Left ventricle myocardium inferior (tissue), 1 donor: ENCODE measurements at regions of chr13 and their contacts with region 1.

Region 1: DNA sequence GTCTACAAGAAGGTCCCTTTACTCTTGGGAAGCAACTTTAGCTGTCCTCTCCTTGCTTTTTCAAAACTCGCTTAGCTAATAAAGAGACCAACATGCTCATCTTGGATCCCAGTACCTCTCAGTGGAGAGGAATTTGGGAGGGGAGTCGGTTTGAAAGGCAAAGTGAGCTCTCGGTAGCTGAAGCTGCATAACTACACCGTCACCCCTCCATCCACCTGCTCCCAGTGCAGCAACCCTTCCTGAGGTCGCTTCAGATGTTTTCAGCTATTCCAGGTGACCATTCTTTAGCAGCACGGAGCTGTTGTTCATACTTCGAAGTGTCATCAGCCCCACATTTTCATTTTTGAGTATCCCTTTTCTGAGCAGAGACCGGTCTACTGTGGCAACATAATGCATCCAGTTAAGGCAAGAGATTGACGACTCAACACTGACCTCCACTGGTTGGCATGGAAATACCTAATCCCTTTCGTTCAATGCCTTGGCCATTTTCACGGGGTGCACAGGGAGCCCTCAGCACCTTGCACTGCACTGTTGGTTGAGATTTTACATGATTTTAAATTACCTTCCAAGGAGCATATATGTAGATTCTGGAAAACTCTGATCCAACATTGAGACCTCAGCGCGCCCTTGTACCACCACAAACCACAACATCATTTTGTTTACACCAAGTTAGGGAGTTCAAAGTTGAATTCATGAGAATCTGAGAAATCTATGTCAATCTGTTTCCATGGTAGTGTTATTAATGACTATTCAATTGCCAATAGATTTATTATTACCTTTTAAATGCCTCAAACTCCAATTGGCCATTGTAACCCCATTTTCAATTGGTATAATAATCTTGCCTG is 42.2 kb downstream of the DLEU7 start:
- DNase-seq: no peak
- H3K4me3 ChIP-seq: peak overlapping the region; percentile 35
- H3K27ac ChIP-seq: peak overlapping the region; percentile 37
- H3K4me1 ChIP-seq: peaks cover 27% of the 10 kb centered on the region
- H3K27me3 ChIP-seq: no peaks in the 10 kb centered on the region
- CTCF ChIP-seq: peak; percentile 84

Region 2: DNA sequence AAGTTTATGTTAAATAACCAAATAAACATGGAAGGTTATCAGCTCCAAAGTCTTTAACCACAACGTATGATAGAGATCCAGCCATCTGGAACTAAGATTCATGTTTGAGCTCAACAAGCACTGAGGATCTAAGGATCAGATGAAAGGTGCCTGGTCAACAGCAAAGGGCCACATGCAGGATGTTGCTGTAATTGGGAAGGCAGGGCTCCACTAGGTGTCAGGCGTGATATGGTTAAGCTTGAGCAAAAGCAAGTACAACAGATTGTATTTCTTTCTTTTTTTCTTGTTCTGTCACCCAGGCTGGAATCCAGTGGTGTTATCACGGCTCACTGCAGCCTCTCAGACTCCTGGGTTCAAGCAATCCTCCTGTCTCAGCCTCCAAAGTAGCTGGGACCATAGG is 1122.1 kb before region 1 on chr13:
- intact Hi-C with region 1: no loop called
- DNase-seq: no peak
- H3K4me3 ChIP-seq: no peak overlapping the region
- H3K27ac ChIP-seq: no peak overlapping the region
- H3K4me1 ChIP-seq: no peaks in the 10 kb centered on the region
- H3K27me3 ChIP-seq: no peaks in the 10 kb centered on the region
- CTCF ChIP-seq: peak; percentile 8

Region 3: DNA sequence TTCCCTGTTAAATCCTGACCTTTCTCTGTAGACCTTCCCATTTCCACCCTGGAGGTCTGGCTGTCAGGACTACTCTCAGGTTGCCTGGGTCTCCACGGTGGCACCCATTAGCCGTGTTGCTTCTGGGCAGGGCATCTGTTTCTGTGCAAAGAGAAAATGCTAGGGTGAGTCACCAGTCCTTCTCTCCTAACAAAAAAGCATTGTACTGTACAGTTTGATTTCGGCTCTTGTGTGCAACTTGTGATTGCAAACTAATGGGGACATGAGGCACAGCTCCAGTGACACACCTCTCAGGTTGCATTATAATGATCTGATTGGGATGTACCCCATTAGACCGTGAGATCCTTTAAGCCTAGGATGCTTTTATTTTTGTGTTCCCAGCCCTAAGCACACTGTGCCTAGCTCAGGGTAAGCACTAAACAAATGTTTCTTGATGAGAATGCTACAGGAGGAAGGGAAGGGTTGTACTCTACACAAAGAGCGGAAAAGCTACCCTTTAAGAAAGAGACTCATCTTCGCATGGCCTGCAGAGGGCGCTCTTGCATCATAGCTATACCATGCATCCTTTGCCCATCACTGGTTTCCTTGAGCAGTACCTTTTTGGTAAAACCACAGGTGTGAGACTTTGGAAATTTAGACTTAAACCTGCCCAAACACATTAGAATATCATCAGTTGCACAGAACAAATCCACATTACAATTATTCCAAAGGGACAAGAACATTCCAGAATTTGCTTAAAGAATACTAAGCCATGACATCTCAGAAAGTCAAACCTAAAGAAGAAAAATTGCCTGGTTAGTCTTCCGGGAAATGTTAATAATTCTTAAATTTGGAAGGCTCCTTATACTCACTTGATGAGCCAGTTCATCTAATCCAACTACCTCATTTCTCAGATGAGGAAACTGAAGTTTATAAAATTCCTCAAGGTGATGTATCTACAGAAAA is 824.7 kb before region 1 on chr13:
- intact Hi-C with region 1: loop called (anchors 5 kb)
- DNase-seq: peak; percentile 56
- H3K4me3 ChIP-seq: no peak overlapping the region
- H3K27ac ChIP-seq: no peak overlapping the region
- H3K4me1 ChIP-seq: peaks cover 17% of the 10 kb centered on the region
- H3K27me3 ChIP-seq: no peaks in the 10 kb centered on the region
- CTCF ChIP-seq: peak; percentile 90

Region 4: GRCh38 chr13:50081679-50082425 is 719.5 kb before region 1 on chr13:
- intact Hi-C with region 1: loop called (anchors 10 kb)
- DNase-seq: peak; percentile 97
- H3K4me3 ChIP-seq: peak overlapping the region; percentile 84
- H3K27ac ChIP-seq: peak overlapping the region; percentile 80
- H3K4me1 ChIP-seq: peaks cover 72% of the 10 kb centered on the region
- H3K27me3 ChIP-seq: peaks cover 5% of the 10 kb centered on the region
- CTCF ChIP-seq: no peak

Region 5: GRCh38 chr13:50745561-50746115 is 55.7 kb before region 1 on chr13:
- intact Hi-C with region 1: no loop called
- DNase-seq: no peak
- H3K4me3 ChIP-seq: no peak overlapping the region
- H3K27ac ChIP-seq: no peak overlapping the region
- H3K4me1 ChIP-seq: no peaks in the 10 kb centered on the region
- H3K27me3 ChIP-seq: no peaks in the 10 kb centered on the region
- CTCF ChIP-seq: no peak